ENCODE measurements at regions of chr5 and their contacts with region 1.

Region 1: GRCh38 chr5:132293066-132293991 is 865 bp upstream of the SLC22A4 start:
- DNase-seq: peak; percentile 63 to 93
- H3K4me3 ChIP-seq: peak overlapping the region; percentile 71 to 72
- H3K27ac ChIP-seq: peak overlapping the region; percentile 89 to 99
- H3K4me1 ChIP-seq: peaks cover 3 to 17% of the 10 kb centered on the region in 2 donors
- H3K27me3 ChIP-seq: no peaks in the 10 kb centered on the region
- CTCF ChIP-seq: peak in 2 of 3 experiments; percentile 8 to 39

Region 2: DNA sequence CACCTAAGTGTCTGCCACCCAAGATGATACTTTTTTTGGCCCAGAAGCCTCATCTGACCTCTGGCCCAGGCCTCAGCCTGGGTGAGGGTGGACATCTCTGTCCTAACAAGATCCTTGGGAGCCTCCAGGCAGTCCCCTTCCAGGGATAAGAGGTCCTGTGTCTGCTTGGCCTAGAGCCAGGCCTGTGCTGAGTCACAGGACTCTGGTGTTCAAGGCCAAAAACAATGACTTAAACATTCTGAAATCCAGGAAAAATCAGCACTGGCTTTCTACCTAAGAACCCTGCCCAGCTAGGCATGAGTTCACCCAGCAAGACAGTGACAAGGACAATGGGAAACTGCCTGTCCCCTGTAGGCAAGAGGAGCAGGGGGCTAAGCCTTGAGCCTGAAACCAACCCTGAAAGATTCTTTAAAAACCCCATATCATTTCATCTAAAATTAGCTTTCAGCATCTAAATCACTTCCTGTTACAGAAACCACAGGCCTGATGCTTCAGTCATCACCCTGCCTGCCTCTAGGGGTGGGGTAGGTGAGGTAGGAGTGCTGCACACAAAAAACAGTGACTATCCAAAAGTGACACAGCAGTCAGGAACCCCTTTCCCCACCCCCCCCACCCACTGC is 189.9 kb before region 1 on chr5:
- intact Hi-C with region 1: no loop called
- DNase-seq: peak; percentile 70 to 96
- H3K4me3 ChIP-seq: no peak overlapping the region
- H3K27ac ChIP-seq: peak overlapping the region; percentile 71 to 72
- H3K4me1 ChIP-seq: peaks cover 9 to 21% of the 10 kb centered on the region in 2 donors
- H3K27me3 ChIP-seq: no peaks in the 10 kb centered on the region
- CTCF ChIP-seq: no peak

Region 3: DNA sequence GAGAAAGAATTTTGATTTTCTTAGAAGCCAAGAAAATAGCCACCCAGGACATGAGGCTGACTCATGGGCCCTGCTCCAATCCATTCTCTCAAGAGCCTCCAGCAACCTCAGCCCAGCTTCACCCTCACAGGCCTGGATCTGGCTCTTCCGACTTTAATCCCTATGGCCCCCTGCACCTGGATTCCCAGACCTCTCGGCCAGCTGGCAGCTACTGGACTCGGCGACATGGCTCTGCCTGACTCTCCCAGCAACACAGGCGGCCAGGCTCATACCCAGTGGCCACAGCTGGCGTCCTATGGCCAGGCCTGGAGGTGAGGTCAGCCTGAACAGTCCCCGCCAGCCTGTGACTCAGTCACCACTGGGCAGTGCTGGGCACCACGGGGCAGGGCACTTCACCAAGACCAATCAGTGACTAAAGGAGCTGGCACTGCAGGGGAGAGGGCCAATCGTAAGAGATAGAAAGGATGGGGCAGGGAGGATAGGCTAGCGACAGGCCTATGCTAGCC is 42.1 kb before region 1 on chr5:
- intact Hi-C with region 1: loop called (anchors 1 kb)
- DNase-seq: peak; percentile 70 to 92
- H3K4me3 ChIP-seq: no peak overlapping the region
- H3K27ac ChIP-seq: peak overlapping the region; percentile 80 to 88
- H3K4me1 ChIP-seq: peaks cover 5 to 23% of the 10 kb centered on the region in 2 donors
- H3K27me3 ChIP-seq: no peaks in the 10 kb centered on the region
- CTCF ChIP-seq: no peak

Region 4: GRCh38 chr5:132272311-132273210 is 20.8 kb before region 1 on chr5:
- intact Hi-C with region 1: loop called (anchors 2 kb)
- DNase-seq: peak in 1 of 2 donors; percentile 82
- H3K4me3 ChIP-seq: peak overlapping the region; percentile 11 to 16
- H3K27ac ChIP-seq: no peak overlapping the region
- H3K4me1 ChIP-seq: peaks cover 0 to 2% of the 10 kb centered on the region in 2 donors
- H3K27me3 ChIP-seq: no peaks in the 10 kb centered on the region
- CTCF ChIP-seq: peak; percentile 74 to 91 (median 89)

Region 5: GRCh38 chr5:132334812-132335211 is 41.5 kb after region 1 on chr5:
- intact Hi-C with region 1: no loop called
- DNase-seq: no peak
- H3K4me3 ChIP-seq: no peak overlapping the region
- H3K27ac ChIP-seq: no peak overlapping the region
- H3K4me1 ChIP-seq: no peaks in the 10 kb centered on the region
- H3K27me3 ChIP-seq: no peaks in the 10 kb centered on the region
- CTCF ChIP-seq: no peak

Region 6: DNA sequence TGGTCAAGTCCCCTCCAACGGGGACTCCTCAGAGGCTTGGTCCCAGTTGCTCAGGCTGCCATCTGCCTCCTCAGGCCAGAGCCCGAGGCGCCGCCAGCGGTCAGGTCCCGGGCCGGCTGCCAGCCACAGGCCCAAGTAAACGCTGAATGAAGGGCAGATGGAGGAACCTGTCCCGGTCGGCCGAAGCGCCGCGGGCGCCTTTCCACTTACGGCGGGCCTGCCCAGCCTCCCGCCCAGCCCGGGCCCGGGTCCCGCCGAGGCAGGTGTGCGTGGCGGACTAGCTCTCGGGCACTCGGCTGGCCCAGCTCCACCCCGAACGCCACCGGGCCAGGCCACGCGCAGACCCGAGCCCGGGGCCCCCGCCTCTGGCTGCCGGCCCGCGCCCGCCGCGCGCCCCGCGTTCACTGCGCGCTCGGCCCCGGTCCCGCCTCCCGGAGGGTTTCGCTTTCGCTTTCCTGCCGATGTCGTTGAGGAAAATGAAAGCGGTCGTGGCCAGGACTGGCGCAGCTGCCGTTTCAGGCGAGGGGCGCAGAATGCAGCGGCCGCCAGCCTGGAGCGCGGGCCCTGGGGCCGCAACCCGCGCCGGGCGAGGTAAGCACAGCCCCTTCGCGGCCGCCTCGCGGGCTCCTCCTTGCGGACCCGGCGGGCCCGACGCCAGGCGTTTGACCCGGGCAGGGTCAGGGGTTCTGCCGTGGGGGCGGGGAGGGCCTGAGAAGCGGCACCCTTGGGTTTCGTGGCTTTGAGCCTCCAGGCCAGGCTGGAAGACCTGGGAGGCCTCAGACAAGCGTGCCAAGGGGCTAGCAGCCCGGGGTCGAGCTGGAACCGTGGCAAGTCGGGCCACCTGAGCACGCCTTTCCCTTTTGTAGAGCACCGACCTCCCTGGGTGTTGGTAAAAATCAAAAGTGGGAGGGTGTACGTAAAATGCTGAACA is 117.4 kb after region 1 on chr5:
- intact Hi-C with region 1: loop called (anchors 5 kb)
- DNase-seq: peak; percentile 63 to 90
- H3K4me3 ChIP-seq: peak overlapping the region; percentile 88 to 96
- H3K27ac ChIP-seq: peak overlapping the region; percentile 97 to 100
- H3K4me1 ChIP-seq: peaks cover 0 to 43% of the 10 kb centered on the region in 2 donors
- H3K27me3 ChIP-seq: no peaks in the 10 kb centered on the region
- CTCF ChIP-seq: peak; percentile 46 to 65 (median 56)

Measured in ascending aorta (tissue), 2 donors.